PC-3 (cell line): ENCODE measurements at regions of chr2 and their contacts with region 1.

Region 1: DNA sequence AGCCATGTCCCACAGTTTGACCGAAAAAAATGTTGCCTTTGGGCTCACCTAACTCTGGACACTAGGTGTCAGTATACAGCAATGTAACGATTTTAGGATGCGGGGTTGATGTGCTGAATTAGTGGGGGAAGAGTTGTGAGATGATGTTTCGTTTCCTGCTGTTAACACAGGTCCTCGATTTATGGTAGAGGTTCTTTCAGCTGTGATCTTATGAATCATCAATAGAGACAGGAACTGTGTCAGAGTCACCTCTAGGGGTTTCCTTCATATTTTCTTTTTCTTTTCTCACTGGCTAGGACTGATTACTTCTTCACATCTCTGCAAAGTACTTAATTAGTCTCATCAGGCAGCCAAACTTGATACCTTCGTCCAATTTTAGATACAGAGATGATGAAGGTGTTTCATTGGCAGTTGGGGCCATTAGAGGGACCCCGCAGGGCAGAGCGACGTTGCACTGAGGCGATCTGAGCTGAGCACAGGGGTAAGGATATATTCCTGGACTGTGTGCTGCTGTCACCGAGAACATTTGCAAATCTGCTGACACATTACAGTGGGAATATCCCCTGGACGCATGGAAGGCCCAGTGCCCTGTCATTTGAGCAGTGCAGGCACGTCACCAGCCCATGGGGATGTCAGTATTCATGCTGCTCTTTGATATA is 10.2 kb upstream of the MMADHC start:
- DNase-seq: peak; percentile 94
- ATAC-seq: peak; percentile 77
- H3K4me3 ChIP-seq: peak overlapping the region; percentile 59
- H3K27ac ChIP-seq: peak overlapping the region; percentile 83
- H3K4me1 ChIP-seq: peaks cover 41% of the 10 kb centered on the region
- H3K27me3 ChIP-seq: no peaks in the 10 kb centered on the region
- CTCF ChIP-seq: peak; percentile 90

Region 2: DNA sequence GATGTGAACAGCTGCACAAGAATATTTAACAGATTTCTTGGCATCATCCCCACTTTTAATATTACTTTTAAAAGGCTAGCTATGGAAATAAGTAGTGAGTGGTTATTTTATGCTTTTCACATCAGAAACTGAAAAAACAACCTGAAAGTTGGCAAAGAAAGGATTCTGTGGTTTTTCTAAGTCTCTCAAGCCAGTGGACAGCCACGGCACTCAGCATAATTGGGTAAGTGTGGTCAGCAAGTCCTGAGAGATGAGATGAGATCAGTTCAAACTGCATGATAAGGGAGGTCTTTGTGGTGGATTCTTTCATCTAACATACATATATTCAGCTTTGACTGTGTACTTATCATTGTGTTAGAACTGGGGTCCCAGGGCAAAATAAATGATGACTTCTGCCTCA is 454.1 kb before region 1 on chr2:
- CTCF ChIA-PET with region 1: no interaction called
- POLR2A ChIA-PET with region 1: no interaction called
- intact Hi-C with region 1: no loop called
- DNase-seq: no peak
- ATAC-seq: no peak
- H3K4me3 ChIP-seq: no peak overlapping the region
- H3K27ac ChIP-seq: no peak overlapping the region
- H3K4me1 ChIP-seq: no peaks in the 10 kb centered on the region
- H3K27me3 ChIP-seq: peaks cover 80% of the 10 kb centered on the region
- CTCF ChIP-seq: no peak

Region 3: DNA sequence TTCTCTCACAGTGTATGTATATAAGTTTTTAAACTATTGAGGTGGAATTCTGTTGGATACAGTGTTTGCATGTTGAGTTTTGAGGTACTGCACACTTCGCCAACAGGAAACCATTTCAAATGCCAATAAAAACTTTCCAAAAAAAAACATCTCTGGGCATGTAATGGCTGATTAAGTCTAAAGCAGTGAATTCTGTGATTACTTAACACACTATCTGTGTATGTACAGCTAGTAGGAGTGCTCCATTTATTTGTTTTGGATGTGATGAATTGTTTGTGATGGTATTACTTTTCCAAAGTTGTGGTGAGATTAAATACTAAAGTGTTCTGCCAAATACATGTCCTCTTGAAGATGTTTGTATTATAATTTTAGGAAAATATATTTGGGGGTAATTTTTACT is 41.3 kb before region 1 on chr2:
- CTCF ChIA-PET with region 1: no interaction called
- POLR2A ChIA-PET with region 1: no interaction called
- intact Hi-C with region 1: no loop called
- DNase-seq: no peak
- ATAC-seq: no peak
- H3K4me3 ChIP-seq: no peak overlapping the region
- H3K27ac ChIP-seq: no peak overlapping the region
- H3K4me1 ChIP-seq: peaks cover 3% of the 10 kb centered on the region; the same call in 1 of the 2 replicates
- H3K27me3 ChIP-seq: no peaks in the 10 kb centered on the region
- CTCF ChIP-seq: no peak

Region 4: DNA sequence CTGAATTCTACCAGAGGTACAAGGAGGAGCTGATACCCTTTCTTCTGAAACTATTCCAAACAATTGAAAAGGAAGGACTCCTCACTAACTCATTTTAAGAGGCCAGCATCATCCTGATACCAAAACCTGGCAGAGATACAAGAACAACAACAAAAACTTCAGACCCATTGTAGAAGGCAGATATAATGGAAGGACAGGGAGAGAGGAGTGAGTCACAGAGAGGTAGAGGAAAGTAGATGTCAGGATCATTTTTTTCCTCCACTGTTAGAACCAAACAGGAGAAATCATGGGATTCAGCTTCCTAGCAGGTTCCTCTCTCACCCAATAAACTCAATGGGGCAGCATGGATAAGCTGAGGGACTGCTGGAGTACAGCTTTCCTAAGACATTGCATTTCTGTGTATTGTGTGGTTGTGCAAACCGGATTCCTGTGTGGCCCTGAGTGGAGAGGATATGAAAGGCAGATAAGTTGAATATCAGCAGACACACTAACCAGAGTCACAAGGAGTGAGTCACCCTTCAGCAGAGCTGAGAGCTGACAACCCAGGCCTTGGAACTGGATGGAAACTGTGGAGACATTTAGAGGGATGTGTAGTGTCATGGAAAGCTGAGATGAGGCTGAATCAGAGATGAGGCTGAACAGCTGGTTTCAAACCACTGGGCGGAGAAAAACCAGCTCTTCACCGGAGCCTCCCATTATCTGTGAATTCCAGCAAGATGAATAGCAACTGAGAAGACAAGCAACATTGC is 50.7 kb after region 1 on chr2:
- CTCF ChIA-PET with region 1: no interaction called
- POLR2A ChIA-PET with region 1: no interaction called
- intact Hi-C with region 1: no loop called
- DNase-seq: peak; percentile 88
- ATAC-seq: peak; percentile 94
- H3K4me3 ChIP-seq: 0 out of 2 replicates have a peak overlapping the region, but pooled peaks have one; percentile 3
- H3K27ac ChIP-seq: peak overlapping the region; percentile 90
- H3K4me1 ChIP-seq: peaks cover 20% of the 10 kb centered on the region
- H3K27me3 ChIP-seq: no peaks in the 10 kb centered on the region
- CTCF ChIP-seq: no peak

Region 5: DNA sequence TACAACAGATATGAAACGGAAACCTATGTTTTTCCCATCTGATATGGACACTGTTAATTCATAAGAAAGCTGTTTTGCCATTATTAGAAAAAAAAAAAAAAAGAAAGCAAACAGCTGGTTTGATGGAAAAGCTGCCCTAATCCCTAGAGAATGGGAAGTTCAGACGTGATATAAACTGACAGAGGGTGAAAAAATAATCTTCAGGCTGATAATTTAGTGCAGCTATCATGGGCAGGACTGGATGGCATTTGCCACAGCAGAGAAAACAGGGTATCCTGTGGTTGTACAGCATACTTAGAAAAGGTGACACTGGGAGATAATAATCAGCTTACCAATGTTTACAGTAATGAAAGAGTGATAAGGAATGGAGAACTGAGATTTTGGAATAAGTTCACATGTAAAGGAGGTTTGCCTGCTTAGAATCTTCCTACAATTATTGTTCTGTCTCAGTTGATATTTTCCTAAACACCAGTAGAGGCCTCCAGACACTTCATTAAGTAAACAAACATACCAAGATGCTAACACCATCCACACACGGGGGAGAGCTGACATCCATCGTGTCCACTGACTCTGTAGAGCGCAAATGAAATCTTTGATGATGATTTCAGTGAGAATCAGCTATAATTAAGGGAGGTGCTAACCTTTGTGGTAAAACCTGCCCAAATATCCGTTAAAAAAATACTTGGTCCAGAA is 201.4 kb after region 1 on chr2:
- CTCF ChIA-PET with region 1: no interaction called
- POLR2A ChIA-PET with region 1: no interaction called
- intact Hi-C with region 1: loop called (anchors 1 kb)
- DNase-seq: peak; percentile 44
- ATAC-seq: peak; percentile 80
- H3K4me3 ChIP-seq: no peak overlapping the region
- H3K27ac ChIP-seq: no peak overlapping the region
- H3K4me1 ChIP-seq: peaks cover 8% of the 10 kb centered on the region
- H3K27me3 ChIP-seq: no peaks in the 10 kb centered on the region
- CTCF ChIP-seq: peak; percentile 65

Region 6: DNA sequence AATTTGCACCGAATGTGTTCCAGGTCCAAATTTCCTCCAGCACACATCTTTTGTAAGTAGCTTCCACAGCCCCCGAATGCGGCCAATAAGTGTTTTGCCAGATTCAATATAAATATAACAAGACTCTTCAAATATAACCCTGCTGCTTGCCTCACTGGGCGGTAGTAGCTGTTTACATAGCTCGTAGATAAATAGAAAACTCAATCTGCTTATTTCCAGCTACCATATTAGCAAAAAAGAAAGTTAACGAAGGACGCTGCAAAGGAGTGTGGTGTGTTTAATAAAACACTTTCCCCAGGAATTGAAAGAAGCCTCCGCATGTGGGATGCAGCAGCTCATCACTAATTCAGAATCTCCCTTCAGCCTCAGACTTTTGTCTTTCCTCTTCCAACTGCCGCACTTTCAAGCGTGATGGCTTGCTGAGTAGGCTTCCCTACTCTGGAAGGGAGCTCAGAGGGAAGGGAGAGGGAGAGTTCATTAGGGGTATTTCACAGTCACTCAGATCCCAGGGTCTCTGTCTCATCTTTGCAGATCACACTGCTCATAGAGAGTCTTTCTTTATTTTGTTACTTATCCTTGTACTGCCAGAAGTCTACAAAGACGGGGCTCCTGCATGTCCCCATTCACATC is 522.6 kb after region 1 on chr2:
- CTCF ChIA-PET with region 1: no interaction called
- POLR2A ChIA-PET with region 1: no interaction called
- intact Hi-C with region 1: no loop called
- DNase-seq: no peak
- ATAC-seq: no peak; the same call in 1 of the 2 replicates
- H3K4me3 ChIP-seq: no peak overlapping the region
- H3K27ac ChIP-seq: no peak overlapping the region
- H3K4me1 ChIP-seq: peaks cover 14% of the 10 kb centered on the region
- H3K27me3 ChIP-seq: no peaks in the 10 kb centered on the region
- CTCF ChIP-seq: no peak

Region 7: GRCh38 chr2:150143087-150143536 is 545.3 kb after region 1 on chr2:
- CTCF ChIA-PET with region 1: no interaction called
- POLR2A ChIA-PET with region 1: no interaction called
- intact Hi-C with region 1: loop called (anchors 2 kb)
- DNase-seq: peak; percentile 94
- ATAC-seq: peak; percentile 29
- H3K4me3 ChIP-seq: peak overlapping the region; percentile 21; the same call in 1 of the 2 replicates
- H3K27ac ChIP-seq: peak overlapping the region; percentile 98
- H3K4me1 ChIP-seq: peaks cover 62% of the 10 kb centered on the region
- H3K27me3 ChIP-seq: no peaks in the 10 kb centered on the region
- CTCF ChIP-seq: no peak

Region 8: GRCh38 chr2:150188177-150188576 is 590.4 kb after region 1 on chr2:
- CTCF ChIA-PET with region 1: no interaction called
- POLR2A ChIA-PET with region 1: no interaction called
- intact Hi-C with region 1: loop called (anchors 1 kb)
- DNase-seq: peak; percentile 93
- ATAC-seq: peak; percentile 91
- H3K4me3 ChIP-seq: peak overlapping the region; percentile 26; the same call in 1 of the 2 replicates
- H3K27ac ChIP-seq: peak overlapping the region; percentile 79
- H3K4me1 ChIP-seq: peaks cover 23% of the 10 kb centered on the region
- H3K27me3 ChIP-seq: no peaks in the 10 kb centered on the region
- CTCF ChIP-seq: peak; percentile 43

Region 9: GRCh38 chr2:150487537-150488429 is 890.0 kb after region 1 on chr2 and contains the start of gene RND3:
- CTCF ChIA-PET with region 1: no interaction called
- POLR2A ChIA-PET with region 1: no interaction called
- intact Hi-C with region 1: loop called (anchors 1 kb)
- DNase-seq: peak; percentile 99
- ATAC-seq: peak; percentile 46
- H3K4me3 ChIP-seq: peak within 1 kb of the TSS; percentile 90
- H3K27ac ChIP-seq: peak within 1 kb of the TSS; percentile 98
- H3K4me1 ChIP-seq: peaks cover 42% of the 10 kb centered on the region
- H3K27me3 ChIP-seq: no peaks in the 10 kb centered on the region
- CTCF ChIP-seq: peak; percentile 93
- total RNA-seq, gene RND3: 145 and 201 TPM in 2 replicates

Region 10: DNA sequence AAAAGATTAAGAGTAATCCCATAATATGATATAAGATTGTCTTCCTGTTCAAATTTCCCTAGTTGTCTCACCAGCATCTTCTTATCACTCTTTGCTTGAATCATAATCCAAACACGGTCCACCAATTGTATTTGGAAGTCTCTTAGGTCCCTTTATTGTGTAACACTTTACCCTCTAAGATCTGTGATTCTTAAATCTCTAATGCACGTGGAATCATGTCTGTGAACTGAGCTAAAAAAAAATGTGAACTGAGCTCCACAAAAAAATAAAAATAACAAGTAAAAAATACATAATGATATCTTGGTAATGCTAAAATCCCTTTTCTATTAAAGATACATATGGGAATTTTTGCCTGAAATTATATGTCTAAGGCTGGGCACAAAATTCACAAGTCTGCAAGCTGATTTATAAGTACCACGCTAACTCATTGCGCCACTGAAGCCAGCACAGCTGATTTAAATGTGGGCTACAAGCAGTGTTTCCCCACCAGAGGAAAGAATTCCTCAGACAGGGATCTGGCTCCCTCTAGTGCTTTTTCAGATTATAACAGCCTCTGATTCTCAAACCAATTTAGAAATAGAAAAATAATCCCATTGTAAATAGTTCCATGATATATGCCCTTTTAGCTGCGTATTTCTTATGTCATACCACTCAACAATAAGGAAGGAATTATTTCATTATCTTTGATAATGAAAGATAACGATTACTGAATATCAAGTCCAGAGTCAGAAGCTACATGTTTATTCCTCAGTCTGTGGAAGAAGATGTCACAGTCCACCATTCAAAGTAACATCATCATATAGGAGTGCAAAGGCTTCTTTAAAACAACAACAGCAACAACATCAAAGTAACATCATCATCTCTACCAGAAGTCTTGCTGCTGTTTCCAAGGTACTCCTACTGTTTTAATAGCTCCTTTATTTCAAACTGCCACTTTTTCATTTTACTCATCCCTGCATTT is 1641.0 kb after region 1 on chr2:
- CTCF ChIA-PET with region 1: no interaction called
- POLR2A ChIA-PET with region 1: no interaction called
- intact Hi-C with region 1: loop called (anchors 1 kb)
- DNase-seq: peak; percentile 86
- ATAC-seq: peak; percentile 52
- H3K4me3 ChIP-seq: no peak overlapping the region
- H3K27ac ChIP-seq: peak overlapping the region; percentile 7
- H3K4me1 ChIP-seq: peaks cover 27% of the 10 kb centered on the region
- H3K27me3 ChIP-seq: no peaks in the 10 kb centered on the region
- CTCF ChIP-seq: peak; percentile 91